Right cardiac atrium (tissue), 5 donors: ENCODE measurements at regions of chr3 and their contacts with region 1.

Region 1: DNA sequence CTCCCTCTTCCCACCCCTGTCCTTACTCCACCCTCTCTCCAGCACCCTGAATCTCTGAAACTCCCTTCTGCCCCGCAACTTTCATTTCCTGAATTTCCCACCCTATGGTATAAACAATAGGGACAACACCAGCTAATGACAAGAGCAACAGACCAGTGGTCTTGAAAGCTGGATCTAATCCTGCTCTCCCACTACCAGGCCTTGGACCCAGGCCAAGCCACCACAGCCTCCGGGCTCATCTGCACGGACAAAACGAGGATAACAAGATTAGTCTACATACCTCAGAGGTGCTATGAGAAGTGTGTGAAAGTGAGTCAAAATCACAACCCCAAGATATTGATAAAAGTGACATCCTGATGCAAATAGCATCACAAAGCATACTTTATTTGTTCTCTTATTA is 128.6 kb downstream of the ERC2 start:
- DNase-seq: no peak
- ATAC-seq: no peak
- H3K4me3 ChIP-seq: no peak overlapping the region
- H3K27ac ChIP-seq: no peak overlapping the region
- H3K4me1 ChIP-seq: peaks cover 4% of the 10 kb centered on the region
- H3K27me3 ChIP-seq: no peaks in the 10 kb centered on the region

Region 2: DNA sequence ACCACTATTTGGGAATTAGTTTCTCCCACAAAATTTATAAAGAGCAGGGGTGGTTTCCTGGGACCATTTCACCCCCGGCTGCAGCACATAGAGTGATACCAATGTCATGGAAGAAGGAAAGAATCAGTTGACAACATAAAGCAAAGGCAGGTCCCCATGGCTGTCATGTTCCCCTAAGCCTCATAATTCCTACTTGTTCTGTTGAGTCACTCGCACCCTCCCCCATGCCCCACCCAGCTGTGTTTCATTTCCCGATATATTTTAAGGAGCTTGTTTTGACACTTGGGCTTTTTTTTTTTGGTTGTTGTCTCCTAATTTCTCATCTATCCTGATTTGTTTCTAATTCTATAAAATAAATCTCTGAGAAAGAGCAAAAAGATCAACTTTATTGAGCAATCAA is 103.7 kb after region 1 on chr3:
- intact Hi-C with region 1: loop called in 1 of 4 experiments (anchors 2 kb)
- DNase-seq: no peak
- ATAC-seq: no peak
- H3K4me3 ChIP-seq: no peak overlapping the region
- H3K27ac ChIP-seq: no peak overlapping the region
- H3K4me1 ChIP-seq: no peaks in the 10 kb centered on the region
- H3K27me3 ChIP-seq: no peaks in the 10 kb centered on the region

Region 3: GRCh38 chr3:56494686-56495322 is 155.1 kb after region 1 on chr3:
- intact Hi-C with region 1: loop called in 3 of 4 experiments (anchors 2 to 10 kb)
- DNase-seq: peak; percentile 76 to 87 (median 86)
- ATAC-seq: peak; percentile 73 to 86
- H3K4me3 ChIP-seq: no peak overlapping the region
- H3K27ac ChIP-seq: no peak overlapping the region
- H3K4me1 ChIP-seq: no peaks in the 10 kb centered on the region
- H3K27me3 ChIP-seq: no peaks in the 10 kb centered on the region